Naive thymus-derived CD4-positive, alpha-beta T cell (primary cell): ENCODE measurements at regions of chr4 and their contacts with region 1.

Region 1: DNA sequence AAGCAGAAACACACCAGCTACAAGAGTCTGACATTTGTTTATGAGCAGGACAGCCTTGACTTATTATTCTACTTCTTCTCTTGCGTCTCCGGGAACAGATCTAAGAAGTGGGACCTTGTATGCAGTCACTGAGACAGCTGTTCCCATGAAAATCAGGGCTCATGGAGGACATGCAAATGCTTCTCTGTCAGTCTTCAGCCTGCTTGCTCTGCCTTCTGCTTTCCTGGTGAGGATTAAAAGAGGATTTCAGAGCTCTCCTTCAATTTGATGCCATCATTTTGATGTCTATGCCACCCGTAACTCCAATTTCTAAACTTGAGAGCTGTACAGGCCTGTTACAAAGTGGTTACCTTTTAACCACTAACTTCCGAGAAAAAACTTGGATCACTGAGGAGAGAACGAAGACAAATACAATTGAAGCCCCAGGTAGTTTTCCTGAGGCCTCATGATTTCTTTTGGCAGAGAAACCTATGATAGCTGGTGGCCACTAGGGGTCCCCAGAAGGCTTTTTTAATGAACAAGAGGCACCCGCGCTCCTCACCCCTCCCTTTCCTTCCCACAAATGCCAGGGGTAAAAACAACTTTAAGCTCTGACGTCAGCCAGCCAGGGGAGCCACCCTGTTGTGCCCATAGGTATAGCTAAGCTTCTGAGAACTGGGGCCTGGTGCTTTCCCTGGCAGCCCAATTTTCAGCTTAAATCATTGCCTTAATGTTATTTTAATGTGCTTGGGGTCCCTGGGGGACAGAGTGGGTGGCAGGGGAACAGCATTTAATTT is 97.0 kb downstream of the DDIT4L start:
- DNase-seq: peak; percentile 42 to 96 (median 89)
- ATAC-seq: peak; percentile 99
- H3K4me3 ChIP-seq: no peak overlapping the region
- H3K4me3 Mint-ChIP-seq: peak overlapping the region in 4 of 10 donors; percentile 8 to 70 (median 48)
- H3K27ac ChIP-seq: peak overlapping the region; percentile 55
- H3K27ac Mint-ChIP-seq: peak overlapping the region; percentile 77 to 99 (median 95)
- H3K4me1 ChIP-seq: peaks cover 0 to 16% of the 10 kb centered on the region in 2 donors
- H3K4me1 Mint-ChIP-seq: peaks cover 9 to 48% (median 20%) of the 10 kb centered on the region in 7 donors
- H3K27me3 ChIP-seq: no peaks in the 10 kb centered on the region
- H3K27me3 Mint-ChIP-seq: no peaks in the 10 kb centered on the region

Region 2: DNA sequence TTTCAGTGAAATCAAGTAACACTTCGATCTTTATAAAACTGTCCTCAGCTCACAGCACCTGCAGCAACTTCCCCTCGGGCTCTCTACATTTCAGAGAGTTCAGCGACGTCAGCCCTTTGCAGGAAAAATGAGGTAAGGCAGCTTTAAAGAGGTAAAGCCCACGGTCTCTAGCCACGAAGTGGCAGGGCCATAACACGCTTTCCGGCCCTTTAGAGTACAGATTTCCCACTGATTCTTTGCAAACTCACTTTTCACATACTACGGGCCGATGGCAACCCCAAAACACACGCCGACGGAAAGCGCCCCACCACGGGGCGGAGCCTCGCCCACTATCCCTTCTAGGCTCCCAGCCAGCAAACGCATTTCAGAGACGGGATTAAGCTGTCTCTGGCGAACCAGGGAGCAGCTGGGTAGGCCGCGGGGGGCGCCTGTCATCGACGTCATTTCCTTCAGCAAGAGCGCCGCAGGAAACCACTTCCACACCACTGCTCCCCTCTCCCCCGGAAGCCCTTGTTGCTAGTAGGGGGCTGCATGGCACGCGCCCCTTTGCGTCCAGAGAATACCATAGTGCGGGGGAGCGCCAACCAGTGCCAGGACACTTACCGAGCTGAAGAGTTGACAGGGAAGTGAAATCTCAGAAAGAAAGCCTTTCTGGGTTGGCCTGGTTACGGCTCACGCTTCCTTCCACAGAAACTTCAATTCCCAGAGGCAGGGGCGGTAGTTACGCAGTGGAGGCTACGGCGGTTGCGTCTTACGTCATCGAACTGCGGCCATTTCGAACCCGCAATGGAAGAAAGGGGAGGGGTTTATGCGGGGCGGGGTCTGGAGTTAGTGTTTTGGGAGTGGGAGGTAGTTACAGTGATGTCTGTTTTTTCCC is 529.7 kb before region 1 on chr4 and contains the start of gene TRMT10A:
- CTCF ChIA-PET with region 1: interaction called, 3 read pairs
- POLR2A ChIA-PET with region 1: interaction called, 3 read pairs
- intact Hi-C with region 1: loop called (anchors 1 to 10 kb)
- DNase-seq: peak; percentile 79 to 98 (median 98)
- ATAC-seq: peak; percentile 91
- H3K4me3 ChIP-seq: peak within 1 kb of the TSS; percentile 92
- H3K4me3 Mint-ChIP-seq: peak within 1 kb of the TSS; percentile 77 to 99 (median 98)
- H3K27ac ChIP-seq: peak within 1 kb of the TSS; percentile 91
- H3K27ac Mint-ChIP-seq: peak within 1 kb of the TSS; percentile 98 to 100 (median 100)
- H3K4me1 ChIP-seq: no peaks in the 10 kb centered on the region
- H3K4me1 Mint-ChIP-seq: peaks cover 0 to 33% (median 28%) of the 10 kb centered on the region in 7 donors
- H3K27me3 ChIP-seq: no peaks in the 10 kb centered on the region
- H3K27me3 Mint-ChIP-seq: peaks cover 13 to 29% (median 23%) of the 10 kb centered on the region in 5 donors
- total RNA-seq, gene TRMT10A: 3.9 to 9.1 (median 7.7) TPM

Region 3: GRCh38 chr4:100106982-100107381 is 13.7 kb after region 1 on chr4:
- CTCF ChIA-PET with region 1: interaction called, 12 read pairs
- POLR2A ChIA-PET with region 1: no interaction called
- intact Hi-C with region 1: loop called in 1 of 2 experiments (anchors 2 kb)
- DNase-seq: peak in 3 of 9 donors; percentile 4 to 27 (median 16)
- ATAC-seq: peak; percentile 71
- H3K4me3 ChIP-seq: no peak overlapping the region
- H3K4me3 Mint-ChIP-seq: peak overlapping the region in 1 of 10 donors; percentile 58
- H3K27ac ChIP-seq: no peak overlapping the region
- H3K27ac Mint-ChIP-seq: peak overlapping the region in 3 of 9 donors; percentile 38 to 50 (median 41)
- H3K4me1 ChIP-seq: peaks cover 0 to 8% of the 10 kb centered on the region in 2 donors
- H3K4me1 Mint-ChIP-seq: peaks cover 6 to 40% (median 11%) of the 10 kb centered on the region in 7 donors
- H3K27me3 ChIP-seq: no peaks in the 10 kb centered on the region
- H3K27me3 Mint-ChIP-seq: no peaks in the 10 kb centered on the region

Region 4: GRCh38 chr4:100421361-100421978 is 328.2 kb after region 1 on chr4:
- CTCF ChIA-PET with region 1: no interaction called
- POLR2A ChIA-PET with region 1: no interaction called
- intact Hi-C with region 1: loop called (anchors 1 to 10 kb)
- DNase-seq: peak in 3 of 9 donors; percentile 1 to 10 (median 1)
- ATAC-seq: no peak
- H3K4me3 ChIP-seq: no peak overlapping the region
- H3K4me3 Mint-ChIP-seq: no peak overlapping the region
- H3K27ac ChIP-seq: no peak overlapping the region
- H3K27ac Mint-ChIP-seq: no peak overlapping the region
- H3K4me1 ChIP-seq: no peaks in the 10 kb centered on the region
- H3K4me1 Mint-ChIP-seq: peaks cover 0 to 4% (median 0%) of the 10 kb centered on the region in 7 donors
- H3K27me3 ChIP-seq: no peaks in the 10 kb centered on the region
- H3K27me3 Mint-ChIP-seq: peaks cover 0 to 9% (median 0%) of the 10 kb centered on the region in 5 donors

Region 5: GRCh38 chr4:100823066-100823992 is 730.0 kb after region 1 on chr4:
- CTCF ChIA-PET with region 1: no interaction called
- POLR2A ChIA-PET with region 1: no interaction called
- intact Hi-C with region 1: loop called in 1 of 2 experiments (anchors 10 kb)
- DNase-seq: peak in 1 of 9 donors; percentile 21
- ATAC-seq: no peak
- H3K4me3 ChIP-seq: no peak overlapping the region
- H3K4me3 Mint-ChIP-seq: no peak overlapping the region
- H3K27ac ChIP-seq: no peak overlapping the region
- H3K27ac Mint-ChIP-seq: peak overlapping the region in 1 of 9 donors; percentile 80
- H3K4me1 ChIP-seq: no peaks in the 10 kb centered on the region
- H3K4me1 Mint-ChIP-seq: peaks cover 0 to 21% (median 0%) of the 10 kb centered on the region in 7 donors
- H3K27me3 ChIP-seq: no peaks in the 10 kb centered on the region
- H3K27me3 Mint-ChIP-seq: peaks cover 0 to 4% (median 0%) of the 10 kb centered on the region in 5 donors

Region 6: GRCh38 chr4:101169044-101170014 is 1076.0 kb after region 1 on chr4:
- CTCF ChIA-PET with region 1: no interaction called
- POLR2A ChIA-PET with region 1: no interaction called
- intact Hi-C with region 1: loop called (anchors 1 to 5 kb)
- DNase-seq: peak; percentile 9 to 64 (median 54)
- ATAC-seq: peak; percentile 96
- H3K4me3 ChIP-seq: no peak overlapping the region
- H3K4me3 Mint-ChIP-seq: no peak overlapping the region
- H3K27ac ChIP-seq: no peak overlapping the region
- H3K27ac Mint-ChIP-seq: no peak overlapping the region
- H3K4me1 ChIP-seq: no peaks in the 10 kb centered on the region
- H3K4me1 Mint-ChIP-seq: peaks cover 0 to 6% (median 3%) of the 10 kb centered on the region in 7 donors
- H3K27me3 ChIP-seq: no peaks in the 10 kb centered on the region
- H3K27me3 Mint-ChIP-seq: no peaks in the 10 kb centered on the region

Region 7: DNA sequence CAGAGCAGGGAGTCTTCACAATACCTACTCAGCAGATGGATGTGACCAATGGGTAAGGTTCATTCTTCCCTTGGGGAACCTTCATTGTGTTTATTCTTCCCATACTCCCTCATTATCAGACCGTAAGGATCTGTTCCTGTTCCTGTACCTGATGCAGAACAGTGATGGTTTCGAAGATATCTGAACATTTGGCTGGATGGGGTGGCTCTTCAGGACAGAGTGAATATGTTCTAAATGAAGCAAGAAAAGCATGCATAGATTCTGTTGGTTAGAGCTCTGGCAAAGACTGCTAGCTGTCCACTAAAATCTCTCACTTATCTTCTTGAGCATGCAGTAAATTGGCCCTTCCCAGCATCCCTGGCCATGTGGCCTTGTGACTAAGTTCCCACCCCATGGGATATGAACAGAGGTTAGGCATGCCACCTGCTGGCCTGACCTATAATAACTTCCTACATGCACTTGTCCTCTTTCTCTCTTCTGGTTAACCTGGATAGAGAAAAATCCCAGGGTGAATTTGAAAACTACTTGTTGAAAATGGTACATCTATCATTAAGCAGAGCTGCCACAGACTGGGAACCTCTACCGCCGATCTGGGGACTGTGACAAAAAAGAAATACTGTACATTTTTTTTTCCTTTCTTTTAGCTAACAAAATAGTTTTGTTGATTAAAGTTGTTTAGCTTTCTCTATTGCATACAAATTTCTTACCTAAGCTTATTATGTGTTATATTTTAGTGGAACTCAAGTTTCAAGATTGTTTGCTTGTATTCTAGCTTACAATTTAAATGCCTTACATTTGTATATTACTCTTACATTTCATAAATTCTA is 1637.2 kb after region 1 on chr4:
- CTCF ChIA-PET with region 1: interaction called, 11 read pairs
- POLR2A ChIA-PET with region 1: no interaction called
- intact Hi-C with region 1: loop called in 1 of 2 experiments (anchors 1 kb)
- DNase-seq: peak in 8 of 9 donors; percentile 8 to 36 (median 27)
- ATAC-seq: peak; percentile 80
- H3K4me3 ChIP-seq: no peak overlapping the region
- H3K4me3 Mint-ChIP-seq: no peak overlapping the region
- H3K27ac ChIP-seq: no peak overlapping the region
- H3K27ac Mint-ChIP-seq: no peak overlapping the region
- H3K4me1 ChIP-seq: no peaks in the 10 kb centered on the region
- H3K4me1 Mint-ChIP-seq: peaks cover 0 to 5% (median 0%) of the 10 kb centered on the region in 7 donors
- H3K27me3 ChIP-seq: no peaks in the 10 kb centered on the region
- H3K27me3 Mint-ChIP-seq: peaks cover 6 to 12% (median 9%) of the 10 kb centered on the region in 5 donors